PC-9 (cell line): ENCODE measurements at regions of chr22 and their contacts with region 1.

Region 1: GRCh38 chr22:21629262-21630149 is at the start of gene YDJC:
- DNase-seq: peak; percentile 80 to 91
- H3K4me3 ChIP-seq: peak within 1 kb of the TSS; percentile 80
- H3K27ac ChIP-seq: peak within 1 kb of the TSS; percentile 75
- H3K4me1 ChIP-seq: peaks cover 7% of the 10 kb centered on the region; the same call in 1 of the 2 replicates
- H3K27me3 ChIP-seq: no peaks in the 10 kb centered on the region
- CTCF ChIP-seq: peak; percentile 55; the same call in 1 of the 2 replicates
- total RNA-seq, gene YDJC: 25.7 and 39.1 TPM in 2 replicates

Region 2: GRCh38 chr22:21641789-21642583 is 12.5 kb after region 1 on chr22 and contains the start of gene SDF2L1:
- CTCF ChIA-PET with region 1: interaction called, 12 read pairs
- POLR2A ChIA-PET with region 1: interaction called, 5 read pairs
- intact Hi-C with region 1: no loop called
- DNase-seq: peak; percentile 93 to 95
- H3K4me3 ChIP-seq: peak within 1 kb of the TSS; percentile 67
- H3K27ac ChIP-seq: peak within 1 kb of the TSS; percentile 74
- H3K4me1 ChIP-seq: no peaks in the 10 kb centered on the region; the same call in 1 of the 2 replicates
- H3K27me3 ChIP-seq: no peaks in the 10 kb centered on the region
- CTCF ChIP-seq: peak; percentile 47
- total RNA-seq, gene SDF2L1: 22.5 and 23.2 TPM in 2 replicates

Region 3: DNA sequence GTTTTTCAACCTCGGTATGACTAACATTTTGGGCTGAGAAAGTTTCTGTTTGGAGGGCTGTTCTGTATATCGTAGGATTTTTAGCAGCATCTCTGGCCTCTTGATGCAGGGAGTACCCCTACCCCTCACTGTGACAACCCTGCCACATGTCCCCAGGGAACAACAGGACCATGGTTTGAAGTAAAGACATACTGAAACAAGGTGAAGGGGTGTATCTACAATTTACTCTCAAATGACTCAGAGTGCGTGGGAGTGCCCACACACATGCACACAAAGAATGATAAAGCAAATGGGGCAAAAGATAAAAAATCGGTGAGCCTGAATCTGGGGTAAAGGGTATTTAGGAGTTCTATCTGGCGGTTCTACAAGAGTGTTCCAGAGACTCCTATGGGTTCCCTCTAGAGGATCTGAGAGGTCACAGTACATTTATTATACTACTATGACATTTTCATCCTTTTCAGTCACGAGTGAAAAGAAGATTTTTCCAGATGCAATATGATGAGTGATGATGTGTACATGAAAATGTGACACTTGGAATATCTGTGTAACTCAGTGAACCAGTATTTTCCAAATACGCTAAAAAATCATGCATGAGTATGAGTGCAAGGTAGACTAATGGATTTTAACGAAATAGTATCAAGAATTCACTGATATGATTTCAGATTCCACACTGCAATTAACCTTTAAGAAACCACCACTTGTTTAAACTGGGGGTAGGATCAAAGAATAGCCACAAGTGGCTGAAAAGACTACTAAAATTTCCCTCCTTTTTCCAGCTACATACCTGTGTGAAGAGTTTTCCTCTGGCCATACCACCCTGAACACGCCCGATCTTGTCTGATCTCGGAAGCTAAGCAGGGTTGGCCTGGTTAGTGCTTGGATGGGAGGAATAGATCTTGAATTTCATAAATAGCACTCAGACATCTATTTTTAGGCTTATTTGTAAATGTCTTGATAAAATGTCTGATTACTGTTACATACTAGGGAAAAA is 162.4 kb after region 1 on chr22:
- CTCF ChIA-PET with region 1: no interaction called
- POLR2A ChIA-PET with region 1: no interaction called
- intact Hi-C with region 1: no loop called
- DNase-seq: no peak
- H3K4me3 ChIP-seq: no peak overlapping the region
- H3K27ac ChIP-seq: no peak overlapping the region
- H3K4me1 ChIP-seq: no peaks in the 10 kb centered on the region
- H3K27me3 ChIP-seq: no peaks in the 10 kb centered on the region
- CTCF ChIP-seq: no peak